Activated CD4-positive, alpha-beta memory T cell treated with anti-CD3 and anti-CD28 coated beads for 36 hours (primary cell): ENCODE measurements at regions of chr2 and their contacts with region 1.

Region 1: GRCh38 chr2:127526149-127527000 is at the start of gene IWS1:
- DNase-seq: peak; percentile 96
- H3K4me3 Mint-ChIP-seq: peak within 1 kb of the TSS; percentile 92
- H3K27ac Mint-ChIP-seq: peak within 1 kb of the TSS; percentile 90
- H3K4me1 Mint-ChIP-seq: peaks cover 34% of the 10 kb centered on the region
- H3K27me3 Mint-ChIP-seq: no peaks in the 10 kb centered on the region
- total RNA-seq, gene IWS1: 57.0 to 57.1 TPM

Region 2: DNA sequence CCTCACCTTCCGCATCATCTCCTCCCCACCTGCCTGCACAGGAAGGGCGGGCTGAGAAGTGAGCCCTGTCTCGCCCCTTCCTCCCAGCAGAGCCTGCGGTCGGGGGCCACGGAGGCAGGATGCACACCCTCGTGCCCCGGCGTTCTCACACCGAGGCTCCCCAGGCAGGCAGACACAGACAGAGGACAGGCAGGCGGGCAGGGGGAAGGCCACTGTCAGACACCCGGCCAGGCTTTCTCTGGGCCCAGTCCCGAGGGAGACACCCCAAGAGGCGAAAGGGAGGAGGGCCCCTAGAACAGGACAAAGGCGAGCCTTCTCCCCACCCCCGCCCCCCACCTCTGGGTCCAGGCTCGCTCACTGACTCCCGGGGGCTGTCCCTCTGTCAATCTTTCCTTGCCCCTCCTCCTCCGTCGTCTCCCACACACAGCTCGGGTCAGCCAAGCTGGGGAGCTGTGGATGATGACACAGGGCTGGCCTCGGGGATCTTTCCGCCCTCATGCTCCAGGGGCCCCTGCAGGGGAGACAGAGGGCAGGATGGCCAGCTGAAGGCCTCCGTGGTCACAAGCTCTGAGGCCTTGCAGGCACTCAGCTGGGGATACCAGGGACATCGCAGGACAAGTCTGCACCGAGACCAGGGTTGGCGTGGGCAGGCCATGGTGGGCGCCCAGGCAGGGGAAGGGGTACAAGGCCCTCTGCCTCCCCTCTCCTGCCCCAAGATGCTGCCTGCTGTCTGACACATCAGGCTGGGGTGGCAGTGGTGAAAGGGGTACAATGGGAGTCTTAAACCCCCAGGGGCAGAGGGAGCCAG is 444.3 kb before region 1 on chr2:
- CTCF ChIA-PET with region 1: no interaction called
- POLR2A ChIA-PET with region 1: no interaction called
- intact Hi-C with region 1: loop called (anchors 2 kb)
- DNase-seq: peak; percentile 84
- H3K4me3 Mint-ChIP-seq: peak overlapping the region; percentile 86
- H3K27ac Mint-ChIP-seq: peak overlapping the region; percentile 95
- H3K4me1 Mint-ChIP-seq: peaks cover 53% of the 10 kb centered on the region
- H3K27me3 Mint-ChIP-seq: no peaks in the 10 kb centered on the region

Region 3: DNA sequence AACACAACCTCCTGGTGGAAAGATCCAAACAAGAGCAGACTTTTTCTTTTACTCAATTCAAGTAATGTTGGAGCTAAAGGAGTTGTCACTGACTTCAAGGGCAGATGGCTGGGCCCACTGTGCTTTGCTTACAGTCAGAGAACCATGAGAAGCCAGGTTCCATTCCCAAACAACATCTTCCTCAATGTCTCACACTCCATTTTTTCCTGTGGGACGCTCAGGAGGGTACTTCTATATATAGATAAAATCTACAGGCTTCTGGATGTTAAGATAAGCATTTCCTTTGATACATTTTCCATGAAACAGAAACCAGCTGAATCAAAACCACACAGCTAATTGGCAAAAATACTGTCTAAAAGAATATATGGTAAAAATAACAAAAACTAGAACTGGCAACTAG is 14.5 kb before region 1 on chr2:
- CTCF ChIA-PET with region 1: no interaction called
- POLR2A ChIA-PET with region 1: no interaction called
- intact Hi-C with region 1: no loop called
- DNase-seq: no peak
- H3K4me3 Mint-ChIP-seq: no peak overlapping the region
- H3K27ac Mint-ChIP-seq: no peak overlapping the region
- H3K4me1 Mint-ChIP-seq: peaks cover 86% of the 10 kb centered on the region
- H3K27me3 Mint-ChIP-seq: no peaks in the 10 kb centered on the region

Region 4: GRCh38 chr2:127649684-127650040 is 123.3 kb after region 1 on chr2:
- CTCF ChIA-PET with region 1: interaction called, 5 read pairs
- POLR2A ChIA-PET with region 1: no interaction called
- intact Hi-C with region 1: loop called (anchors 2 kb)
- DNase-seq: peak; percentile 83
- H3K4me3 Mint-ChIP-seq: no peak overlapping the region
- H3K27ac Mint-ChIP-seq: no peak overlapping the region
- H3K4me1 Mint-ChIP-seq: peaks cover 7% of the 10 kb centered on the region
- H3K27me3 Mint-ChIP-seq: no peaks in the 10 kb centered on the region

Region 5: GRCh38 chr2:127810619-127811396 is 284.4 kb after region 1 on chr2 and contains the start of gene WDR33:
- CTCF ChIA-PET with region 1: no interaction called
- POLR2A ChIA-PET with region 1: no interaction called
- intact Hi-C with region 1: loop called (anchors 5 kb)
- DNase-seq: peak; percentile 97
- H3K4me3 Mint-ChIP-seq: peak within 1 kb of the TSS; percentile 92
- H3K27ac Mint-ChIP-seq: peak within 1 kb of the TSS; percentile 98
- H3K4me1 Mint-ChIP-seq: peaks cover 42% of the 10 kb centered on the region
- H3K27me3 Mint-ChIP-seq: no peaks in the 10 kb centered on the region
- total RNA-seq, gene WDR33: 62.9 to 64.7 TPM

Region 6: DNA sequence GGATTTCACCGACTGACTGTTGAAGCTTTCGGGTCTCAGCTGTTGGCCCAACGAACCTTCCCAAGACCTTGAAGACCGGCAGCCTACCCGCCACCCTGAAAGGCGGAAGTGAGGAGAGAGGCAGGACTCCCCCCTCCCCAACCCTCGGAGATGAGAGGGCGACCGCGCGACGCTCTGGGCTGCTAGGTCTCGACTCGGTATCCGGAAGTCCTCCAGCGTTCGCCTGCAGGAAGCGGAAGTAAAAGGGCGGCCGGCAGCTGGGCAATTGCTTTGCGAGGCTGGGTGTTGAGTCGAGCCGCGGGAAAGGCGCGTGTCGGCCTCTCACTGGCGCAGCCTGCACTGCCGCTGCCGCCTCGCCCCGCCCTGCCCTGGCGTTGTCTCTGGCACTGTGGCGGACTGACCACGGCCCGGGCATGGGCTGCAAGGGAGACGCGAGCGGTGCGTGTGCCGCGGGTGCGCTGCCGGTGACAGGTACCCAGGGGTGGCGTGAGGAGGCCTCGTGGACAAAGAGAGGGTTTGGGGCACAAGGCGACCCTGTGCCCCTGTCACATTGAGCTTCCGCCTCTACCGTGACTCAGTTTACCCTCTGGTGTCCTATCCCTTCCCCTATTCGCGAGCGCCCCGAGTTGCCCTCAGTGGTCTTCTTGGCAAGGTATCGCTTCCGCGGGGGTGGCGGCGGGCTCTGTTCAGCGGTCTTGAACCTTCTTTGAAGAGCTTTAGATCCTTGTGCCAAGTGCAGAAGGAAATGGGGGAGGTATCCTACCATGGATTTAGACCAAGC is 564.8 kb after region 1 on chr2 and contains the start of gene UGGT1:
- CTCF ChIA-PET with region 1: no interaction called
- POLR2A ChIA-PET with region 1: interaction called, 4 read pairs
- intact Hi-C with region 1: loop called (anchors 5 kb)
- DNase-seq: peak; percentile 96
- H3K4me3 Mint-ChIP-seq: peak within 1 kb of the TSS; percentile 91
- H3K27ac Mint-ChIP-seq: peak within 1 kb of the TSS; percentile 92
- H3K4me1 Mint-ChIP-seq: peaks cover 41% of the 10 kb centered on the region
- H3K27me3 Mint-ChIP-seq: no peaks in the 10 kb centered on the region
- total RNA-seq, gene UGGT1: 50.8 to 53.2 TPM